ENCODE measurements at regions of chr3 and their contacts with region 1.

Region 1: DNA sequence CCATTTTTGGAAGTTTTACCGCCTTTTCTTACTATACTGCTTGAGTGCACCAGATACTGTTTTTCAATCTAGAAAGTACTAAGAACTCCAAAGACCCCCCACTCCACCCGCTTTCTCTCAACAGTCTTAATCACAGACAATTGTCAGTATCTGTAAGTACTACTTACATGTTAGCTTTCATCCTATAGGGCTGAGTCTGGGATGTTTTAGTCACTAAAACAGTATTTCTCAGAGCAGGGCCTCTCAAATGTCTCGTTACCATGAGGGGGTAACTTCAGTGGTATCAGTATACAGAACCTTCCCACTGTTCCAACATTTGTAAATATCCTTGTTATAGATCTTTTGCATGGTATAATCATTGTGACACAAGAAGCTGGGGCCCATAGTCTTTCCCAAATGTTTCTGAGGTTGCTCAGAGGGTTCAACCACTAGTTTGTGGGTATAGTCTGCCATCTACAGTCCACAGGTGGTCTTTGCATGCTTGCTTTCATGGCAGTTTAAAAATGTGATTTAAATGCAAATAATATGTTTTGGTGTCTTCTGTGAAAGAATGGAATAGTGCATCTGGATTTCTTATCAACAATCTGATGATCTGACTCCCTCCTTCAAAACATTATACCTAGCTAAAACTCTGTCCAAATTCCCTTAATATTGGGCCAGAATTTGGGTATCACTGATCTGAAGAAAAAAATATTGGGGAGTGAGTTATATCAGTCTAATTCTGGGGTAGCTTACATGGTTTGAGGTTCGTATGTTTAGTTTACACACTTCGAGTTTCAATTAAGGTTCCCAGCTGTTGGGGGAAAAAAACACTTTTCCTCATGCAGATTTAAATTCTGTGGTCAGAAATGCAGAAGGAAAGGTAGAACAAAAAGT is 18.0 kb upstream of the DNAJC13 start:
- DNase-seq: no peak
- H3K4me3 ChIP-seq: no peak overlapping the region
- H3K27ac ChIP-seq: no peak overlapping the region
- H3K4me1 ChIP-seq: no peaks in the 10 kb centered on the region
- H3K27me3 ChIP-seq: no peaks in the 10 kb centered on the region
- CTCF ChIP-seq: peak; percentile 14 to 48 (median 41)
- EP300 ChIP-seq: no peak
- POLR2A ChIP-seq: no peak

Region 2: DNA sequence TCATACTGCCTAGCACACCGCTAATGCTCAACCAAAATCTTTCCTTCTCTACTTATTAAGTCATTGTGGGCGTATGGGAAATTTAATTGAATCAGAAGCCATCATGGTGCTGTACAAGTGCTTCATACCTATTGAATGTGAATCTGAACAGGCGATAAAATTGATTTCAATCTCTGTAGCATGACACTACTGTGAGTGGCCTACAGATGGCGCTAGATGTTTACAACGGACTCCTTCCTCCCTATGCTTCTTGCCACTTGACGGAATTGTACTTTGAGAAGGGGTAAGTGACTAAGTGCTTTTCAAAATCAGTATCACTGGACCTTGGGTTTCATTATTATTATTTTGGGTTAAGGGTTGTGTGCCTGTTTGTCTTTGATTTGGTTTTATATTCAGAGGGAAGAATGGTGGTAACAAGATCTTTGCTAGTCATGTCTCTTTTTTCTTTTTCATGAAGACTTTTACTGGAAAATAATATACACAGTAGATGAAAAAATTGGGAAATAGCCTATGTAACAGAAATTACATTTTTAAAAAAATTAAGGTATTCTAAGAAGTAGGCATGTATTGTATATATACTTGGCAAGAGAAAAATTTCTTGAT is 46.6 kb before region 1 on chr3:
- intact Hi-C with region 1: loop called (anchors 5 kb)
- DNase-seq: peak; percentile 72
- H3K4me3 ChIP-seq: no peak overlapping the region
- H3K27ac ChIP-seq: no peak overlapping the region
- H3K4me1 ChIP-seq: no peaks in the 10 kb centered on the region
- H3K27me3 ChIP-seq: no peaks in the 10 kb centered on the region
- CTCF ChIP-seq: peak; percentile 59 to 89 (median 82)
- EP300 ChIP-seq: no peak
- POLR2A ChIP-seq: no peak

Measured in sigmoid colon (tissue), 7 donors.